ENCODE measurements at regions of chr11 and their contacts with region 1.

Region 1: DNA sequence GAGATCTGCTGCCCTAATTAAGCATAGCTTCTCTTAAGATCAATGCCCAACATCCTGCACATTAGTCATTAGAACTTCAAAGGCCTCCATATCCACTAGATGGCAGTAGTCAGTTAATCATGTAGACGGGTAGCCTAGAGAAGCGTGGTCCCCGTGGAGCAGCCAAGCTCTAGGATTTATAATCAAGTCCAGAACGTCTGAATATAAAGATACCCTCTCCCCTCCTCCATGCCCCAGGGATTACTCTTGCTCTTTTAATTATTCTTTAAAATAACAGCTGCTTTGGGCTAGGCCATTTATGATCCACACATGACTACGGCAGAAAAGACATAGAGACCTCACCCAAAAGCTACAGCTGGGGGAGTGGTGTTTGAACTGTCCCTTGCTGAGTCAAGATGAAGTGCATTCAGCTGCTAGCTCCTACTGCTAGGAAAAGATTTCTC is 327.6 kb upstream of the PLET1 start:
- DNase-seq: peak; percentile 77 to 97 (median 84)
- H3K4me3 ChIP-seq: no peak overlapping the region
- H3K27ac ChIP-seq: no peak overlapping the region
- H3K4me1 ChIP-seq: peaks cover 0 to 2% (median 0%) of the 10 kb centered on the region in 3 donors
- H3K27me3 ChIP-seq: no peaks in the 10 kb centered on the region
- CTCF ChIP-seq: peak; percentile 68

Region 2: GRCh38 chr11:113289431-113290187 is 701.3 kb after region 1 on chr11:
- intact Hi-C with region 1: loop called (anchors 10 kb)
- DNase-seq: peak in 4 of 5 donors; percentile 76 to 83 (median 78)
- H3K4me3 ChIP-seq: no peak overlapping the region
- H3K27ac ChIP-seq: no peak overlapping the region
- H3K4me1 ChIP-seq: peaks cover 0 to 2% (median 0%) of the 10 kb centered on the region in 3 donors
- H3K27me3 ChIP-seq: no peaks in the 10 kb centered on the region
- CTCF ChIP-seq: peak; percentile 76